Activated T-helper 2 cell treated with anti-CD3 and anti-CD28 coated beads, Interferon-gamma antibody, Interleukin-2, Interleukin-4, amounts not matched to agents 10 μg/mL and 5 μg/mL and 100 μg/mL, durations not matched to agents 14 hours and 24 hours and 36 hours (primary cell): ENCODE measurements at regions of chr1 and their contacts with region 1.

Region 1: DNA sequence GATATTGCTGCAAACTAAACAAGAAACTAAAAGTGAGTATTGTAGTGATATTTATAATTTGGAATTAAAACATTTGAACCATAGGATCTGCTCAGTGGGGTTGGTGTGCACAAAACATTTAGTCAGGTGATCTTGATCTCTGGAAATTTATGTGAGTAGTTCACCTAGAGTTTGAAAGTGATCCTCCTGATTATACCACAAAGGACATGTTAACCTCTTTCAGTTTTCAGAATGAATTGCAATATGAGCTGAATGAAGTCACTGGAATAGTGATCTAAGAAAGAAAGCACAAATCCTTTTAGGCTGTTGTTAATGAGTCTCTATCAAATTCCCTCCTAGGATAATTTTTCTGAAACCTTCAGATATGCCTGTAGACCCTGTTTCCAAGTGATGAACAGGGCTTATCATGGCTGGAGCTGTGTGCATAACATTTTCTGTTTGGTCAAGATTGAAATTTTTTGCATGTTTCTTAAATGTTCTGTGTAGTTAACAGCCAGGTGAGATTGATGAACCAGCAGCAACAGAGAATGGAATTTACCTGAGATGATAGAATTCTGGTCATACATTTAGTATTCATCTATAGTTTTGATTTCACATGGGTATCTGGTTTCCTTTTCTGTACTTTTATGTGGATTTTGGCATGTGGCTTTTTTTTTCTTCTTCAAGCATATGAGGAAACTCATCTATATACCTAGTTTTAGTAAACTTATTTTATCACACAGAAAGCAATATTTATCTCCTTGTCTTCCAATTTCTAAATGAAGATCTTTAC is 25.5 kb downstream of the CDC14A start:
- DNase-seq: no peak
- H3K4me3 Mint-ChIP-seq: peak overlapping the region; percentile 37
- H3K27ac Mint-ChIP-seq: peak overlapping the region; percentile 80
- H3K4me1 Mint-ChIP-seq: peaks cover 35% of the 10 kb centered on the region
- H3K27me3 Mint-ChIP-seq: peaks cover 8% of the 10 kb centered on the region

Region 2: GRCh38 chr1:99526926-99527477 is 850.8 kb before region 1 on chr1:
- intact Hi-C with region 1: no loop called
- DNase-seq: no peak
- H3K4me3 Mint-ChIP-seq: no peak overlapping the region
- H3K27ac Mint-ChIP-seq: no peak overlapping the region
- H3K4me1 Mint-ChIP-seq: no peaks in the 10 kb centered on the region
- H3K27me3 Mint-ChIP-seq: peaks cover 4% of the 10 kb centered on the region

Region 3: GRCh38 chr1:99623554-99623953 is 754.2 kb before region 1 on chr1:
- intact Hi-C with region 1: no loop called
- DNase-seq: no peak
- H3K4me3 Mint-ChIP-seq: no peak overlapping the region
- H3K27ac Mint-ChIP-seq: no peak overlapping the region
- H3K4me1 Mint-ChIP-seq: no peaks in the 10 kb centered on the region
- H3K27me3 Mint-ChIP-seq: no peaks in the 10 kb centered on the region

Region 4: DNA sequence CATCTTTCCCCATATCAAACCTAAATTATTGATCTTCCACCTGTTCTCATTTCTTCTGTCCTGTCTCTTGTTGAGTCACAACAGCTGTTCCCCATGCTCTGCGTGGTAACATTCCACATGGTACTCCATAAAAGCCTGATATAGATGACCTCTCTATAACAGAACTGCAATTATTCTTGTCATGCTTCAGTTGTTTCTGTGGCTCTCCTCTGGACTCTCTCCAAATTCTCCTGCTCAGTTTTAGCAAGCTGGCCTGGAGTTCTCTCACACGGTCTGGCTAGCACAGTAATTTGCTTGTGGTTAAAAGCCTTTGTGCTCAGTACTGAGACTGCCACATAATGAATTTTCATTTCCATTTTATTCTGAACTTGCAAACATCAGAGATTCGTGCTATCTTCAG is 189.2 kb before region 1 on chr1:
- intact Hi-C with region 1: no loop called
- DNase-seq: no peak
- H3K4me3 Mint-ChIP-seq: no peak overlapping the region
- H3K27ac Mint-ChIP-seq: no peak overlapping the region
- H3K4me1 Mint-ChIP-seq: peaks cover 6% of the 10 kb centered on the region
- H3K27me3 Mint-ChIP-seq: no peaks in the 10 kb centered on the region

Region 5: GRCh38 chr1:100351095-100351891 is 26.5 kb before region 1 on chr1:
- intact Hi-C with region 1: loop called (anchors 1 kb)
- DNase-seq: peak; percentile 84
- H3K4me3 Mint-ChIP-seq: peak overlapping the region; percentile 87
- H3K27ac Mint-ChIP-seq: peak overlapping the region; percentile 89
- H3K4me1 Mint-ChIP-seq: peaks cover 35% of the 10 kb centered on the region
- H3K27me3 Mint-ChIP-seq: peaks cover 4% of the 10 kb centered on the region

Region 6: GRCh38 chr1:100400404-100400803 is 22.6 kb after region 1 on chr1:
- intact Hi-C with region 1: loop called (anchors 2 kb)
- DNase-seq: peak; percentile 56
- H3K4me3 Mint-ChIP-seq: peak overlapping the region; percentile 48
- H3K27ac Mint-ChIP-seq: peak overlapping the region; percentile 90
- H3K4me1 Mint-ChIP-seq: peaks cover 68% of the 10 kb centered on the region
- H3K27me3 Mint-ChIP-seq: no peaks in the 10 kb centered on the region

Region 7: DNA sequence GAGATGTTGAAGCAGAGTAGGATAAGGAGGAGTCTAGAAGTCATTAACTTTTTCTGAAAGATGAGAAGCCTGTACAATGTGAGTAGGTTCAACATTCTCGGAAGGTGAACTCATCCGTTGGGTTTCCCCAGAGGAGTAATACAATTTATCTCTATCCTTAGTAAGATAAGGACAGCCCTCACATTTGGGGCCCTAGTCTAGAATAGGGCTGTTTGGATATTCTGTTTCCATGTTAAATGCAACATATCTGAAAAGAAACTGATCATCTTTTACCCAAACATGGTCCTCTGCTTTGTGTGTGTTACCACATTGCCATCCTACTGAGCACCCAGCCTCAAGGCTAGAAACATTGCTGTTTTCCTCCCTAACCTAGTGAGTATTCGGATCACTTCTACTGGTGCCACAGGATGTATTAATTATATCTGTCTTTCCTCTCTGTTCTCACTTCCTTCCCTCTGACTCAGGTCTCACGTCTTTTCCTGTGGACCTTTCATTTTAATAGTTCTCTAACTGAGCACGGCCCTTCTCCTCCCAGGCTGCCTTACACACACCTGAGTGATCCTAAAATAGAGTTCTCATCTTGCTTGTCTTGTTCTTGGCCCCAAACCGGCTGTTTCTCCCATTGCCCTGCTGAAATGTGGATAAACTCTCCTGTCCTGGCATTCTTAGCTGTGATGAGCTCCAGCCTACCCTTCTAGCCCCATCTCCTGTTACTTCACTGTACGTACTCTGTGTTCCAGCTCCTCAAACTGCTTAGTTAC is 66.2 kb after region 1 on chr1:
- intact Hi-C with region 1: loop called (anchors 1 kb)
- DNase-seq: peak; percentile 21
- H3K4me3 Mint-ChIP-seq: peak overlapping the region; percentile 68
- H3K27ac Mint-ChIP-seq: peak overlapping the region; percentile 92
- H3K4me1 Mint-ChIP-seq: peaks cover 75% of the 10 kb centered on the region
- H3K27me3 Mint-ChIP-seq: no peaks in the 10 kb centered on the region

Region 8: DNA sequence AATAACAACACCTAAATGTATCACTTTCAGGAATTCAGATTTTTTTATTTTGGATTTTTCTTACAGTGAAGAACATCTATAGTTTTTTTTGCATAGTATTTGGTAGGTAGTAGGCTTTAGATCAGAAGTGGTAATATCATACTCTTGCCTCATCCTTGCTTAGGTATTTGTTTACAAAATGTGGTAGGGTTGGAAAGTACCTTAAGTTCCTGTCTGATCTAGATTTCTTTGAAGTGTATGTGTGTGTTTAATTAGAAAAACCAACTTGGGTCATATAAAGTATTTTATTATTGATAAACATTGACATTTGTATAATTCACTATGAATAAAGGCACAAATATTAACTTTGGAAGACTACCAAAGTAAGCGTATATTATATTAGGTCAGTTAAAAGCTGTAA is 74.9 kb after region 1 on chr1:
- intact Hi-C with region 1: loop called (anchors 2 kb)
- DNase-seq: no peak
- H3K4me3 Mint-ChIP-seq: no peak overlapping the region
- H3K27ac Mint-ChIP-seq: peak overlapping the region; percentile 27
- H3K4me1 Mint-ChIP-seq: peaks cover 68% of the 10 kb centered on the region
- H3K27me3 Mint-ChIP-seq: no peaks in the 10 kb centered on the region